ENCODE measurements at regions of chr7 and their contacts with region 1.

Region 1: DNA sequence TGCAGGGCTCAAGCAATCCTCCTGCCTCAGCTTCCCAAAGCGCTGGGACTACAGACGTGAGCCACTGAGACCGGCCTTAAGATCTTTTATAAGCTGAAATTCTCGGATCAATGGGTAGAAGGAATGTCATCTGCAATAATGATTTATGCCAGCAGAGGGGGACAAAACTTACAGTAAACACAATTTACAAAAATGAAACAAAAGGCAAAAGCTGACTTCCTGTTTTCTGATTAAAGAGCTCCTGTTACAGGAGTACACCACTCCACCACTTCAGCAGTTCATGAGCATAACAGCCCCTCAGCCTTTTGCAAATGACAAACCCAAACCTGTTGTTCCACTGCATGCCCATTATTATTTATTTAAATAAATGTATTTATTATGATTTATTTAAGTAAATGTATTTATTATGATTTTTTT is 88.5 kb upstream of the ATP6V0A4 start:
- DNase-seq: no peak
- H3K4me3 ChIP-seq: no peak overlapping the region
- CTCF ChIP-seq: peak; percentile 22

Region 2: DNA sequence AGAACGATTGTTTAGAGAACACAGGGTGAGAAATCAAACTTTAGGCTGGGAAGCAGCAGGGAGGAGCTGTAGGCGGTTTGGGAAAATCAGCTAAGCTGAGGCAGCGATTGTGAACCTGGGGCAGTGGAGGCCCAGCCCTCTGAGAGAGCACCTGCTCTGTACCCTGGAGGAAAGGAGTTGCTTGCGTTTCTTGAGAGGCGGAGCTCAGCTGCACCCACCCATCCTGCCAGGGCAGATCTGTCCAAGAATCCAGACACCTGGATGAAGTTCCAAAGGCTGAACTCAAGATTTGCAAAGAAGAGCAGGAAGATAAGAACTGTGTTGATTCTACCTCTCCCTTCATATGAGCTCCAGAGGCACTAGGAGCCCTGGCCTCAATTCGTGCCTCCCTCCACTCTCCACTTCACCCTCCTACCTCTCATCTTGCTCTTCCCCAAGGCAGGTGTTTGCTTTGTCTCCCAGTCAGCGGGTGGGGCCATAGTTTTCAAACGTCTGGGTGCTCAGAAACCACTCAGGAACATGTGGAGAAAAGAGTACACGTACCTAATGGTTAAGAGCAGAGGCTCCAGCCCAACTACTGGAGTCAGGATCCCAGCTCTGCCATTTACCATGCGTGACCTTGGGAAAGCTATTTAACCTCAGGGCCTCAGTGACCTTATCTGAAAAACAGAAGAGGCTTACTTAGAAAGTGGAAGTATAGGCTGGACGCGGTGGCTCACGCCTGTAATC is 110.2 kb before region 1 on chr7:
- CTCF ChIA-PET with region 1: no interaction called
- POLR2A ChIA-PET with region 1: no interaction called
- DNase-seq: no peak
- H3K4me3 ChIP-seq: no peak overlapping the region
- CTCF ChIP-seq: no peak

Region 3: GRCh38 chr7:138875794-138876193 is 10.7 kb before region 1 on chr7:
- CTCF ChIA-PET with region 1: interaction called, 48 read pairs
- POLR2A ChIA-PET with region 1: no interaction called
- DNase-seq: peak; percentile 76
- H3K4me3 ChIP-seq: no peak overlapping the region
- CTCF ChIP-seq: no peak

Region 4: DNA sequence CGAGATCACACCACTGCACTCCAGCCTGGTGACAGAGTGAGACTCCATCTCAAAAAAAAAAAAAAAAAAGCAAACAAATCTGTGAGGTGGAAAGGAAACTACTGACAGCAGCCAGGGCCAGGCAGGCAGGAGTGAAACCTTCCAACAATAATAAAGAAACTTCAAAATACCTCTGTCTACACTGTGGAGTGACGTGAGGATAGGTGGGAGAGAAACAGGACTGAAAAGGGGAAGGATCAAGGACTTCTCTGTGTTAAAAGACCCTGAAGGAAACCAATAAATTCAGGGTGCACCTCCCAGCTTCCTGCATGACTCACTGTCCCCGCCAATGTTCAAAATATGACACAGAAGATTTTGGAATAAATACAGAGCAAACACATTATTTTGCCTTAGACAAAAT is 11.7 kb after region 1 on chr7:
- CTCF ChIA-PET with region 1: interaction called, 20 read pairs
- POLR2A ChIA-PET with region 1: no interaction called
- DNase-seq: no peak
- H3K4me3 ChIP-seq: no peak overlapping the region
- CTCF ChIP-seq: no peak

Region 5: DNA sequence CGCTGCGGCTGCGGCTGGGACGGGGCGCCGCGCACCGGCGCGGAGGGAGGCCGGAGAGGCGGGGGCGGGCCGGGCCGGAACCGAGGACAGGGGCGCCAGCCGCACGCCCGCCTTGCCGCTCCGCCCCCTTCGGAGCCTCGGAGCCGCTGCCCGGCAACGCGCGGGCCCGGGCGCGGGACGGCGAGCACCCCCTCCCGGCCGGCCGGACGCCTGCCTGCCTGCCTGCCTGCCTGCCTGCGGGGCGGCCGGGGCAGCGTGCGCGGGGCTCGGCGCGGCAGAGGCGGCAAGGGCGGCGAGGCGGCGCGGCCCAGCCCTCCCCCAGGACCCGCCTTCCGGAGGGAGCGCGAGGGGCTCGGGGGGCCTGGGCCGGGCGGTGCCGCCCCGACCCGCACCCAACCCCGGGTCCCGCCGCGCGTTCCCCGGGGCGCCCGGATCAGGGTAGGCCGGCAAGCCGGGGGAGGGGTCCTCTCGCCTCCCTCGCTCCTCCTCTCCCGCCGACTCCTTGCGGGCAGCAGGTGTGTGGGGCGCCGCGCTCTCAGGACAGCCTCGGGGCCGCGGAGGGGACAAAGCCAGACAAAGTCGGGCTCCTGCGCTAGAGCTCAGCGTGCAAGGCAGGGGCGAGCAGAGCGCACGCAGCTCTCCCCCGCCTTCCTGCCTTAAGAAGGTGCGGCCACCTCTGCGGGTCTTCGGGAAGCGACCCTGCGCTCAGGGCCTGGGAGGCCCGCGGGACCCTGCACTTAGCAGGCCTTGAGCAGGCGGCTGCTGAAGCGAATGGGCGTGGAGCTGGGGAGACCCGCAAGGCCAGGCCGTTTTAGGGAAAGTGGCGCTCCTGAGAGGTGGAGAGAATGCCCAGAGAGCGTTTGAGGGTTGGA is 95.1 kb after region 1 on chr7 and contains the start of gene KIAA1549:
- CTCF ChIA-PET with region 1: interaction called, 19 read pairs
- POLR2A ChIA-PET with region 1: interaction called, 3 read pairs
- DNase-seq: no peak
- H3K4me3 ChIP-seq: peak within 1 kb of the TSS; percentile 66
- CTCF ChIP-seq: no peak

Region 6: DNA sequence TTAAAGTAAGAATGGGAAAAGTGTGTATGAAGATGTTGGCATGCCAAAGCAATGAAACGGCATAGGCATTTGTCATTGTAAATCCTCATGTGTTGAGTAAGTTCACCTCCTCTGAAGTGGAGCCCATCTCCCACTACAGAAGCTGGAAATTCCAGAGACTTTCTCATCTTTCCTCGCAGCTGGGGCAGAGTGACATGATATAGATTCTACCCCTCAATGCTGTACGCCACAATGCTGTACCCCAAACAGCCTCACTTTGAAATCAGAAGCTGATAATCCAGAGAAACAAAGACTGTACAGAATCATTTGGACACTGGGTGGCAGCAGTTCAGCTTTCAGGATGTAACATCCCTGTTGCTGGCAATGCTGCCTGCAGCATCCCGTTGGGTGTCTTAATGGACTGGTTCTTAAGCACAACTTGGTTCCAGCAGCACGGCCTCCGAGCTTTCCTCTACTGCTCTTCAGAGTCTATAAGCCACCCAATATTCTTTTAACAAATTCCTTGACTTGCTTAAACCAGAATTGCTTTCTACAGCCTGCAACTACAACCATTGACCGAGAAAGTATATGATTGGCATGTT is 130.5 kb after region 1 on chr7:
- CTCF ChIA-PET with region 1: interaction called, 13 read pairs
- POLR2A ChIA-PET with region 1: no interaction called
- DNase-seq: no peak
- H3K4me3 ChIP-seq: no peak overlapping the region
- CTCF ChIP-seq: peak; percentile 72